Heart left ventricle (tissue), 16 donors: ENCODE measurements at regions of chr14 and their contacts with region 1.

Region 1: DNA sequence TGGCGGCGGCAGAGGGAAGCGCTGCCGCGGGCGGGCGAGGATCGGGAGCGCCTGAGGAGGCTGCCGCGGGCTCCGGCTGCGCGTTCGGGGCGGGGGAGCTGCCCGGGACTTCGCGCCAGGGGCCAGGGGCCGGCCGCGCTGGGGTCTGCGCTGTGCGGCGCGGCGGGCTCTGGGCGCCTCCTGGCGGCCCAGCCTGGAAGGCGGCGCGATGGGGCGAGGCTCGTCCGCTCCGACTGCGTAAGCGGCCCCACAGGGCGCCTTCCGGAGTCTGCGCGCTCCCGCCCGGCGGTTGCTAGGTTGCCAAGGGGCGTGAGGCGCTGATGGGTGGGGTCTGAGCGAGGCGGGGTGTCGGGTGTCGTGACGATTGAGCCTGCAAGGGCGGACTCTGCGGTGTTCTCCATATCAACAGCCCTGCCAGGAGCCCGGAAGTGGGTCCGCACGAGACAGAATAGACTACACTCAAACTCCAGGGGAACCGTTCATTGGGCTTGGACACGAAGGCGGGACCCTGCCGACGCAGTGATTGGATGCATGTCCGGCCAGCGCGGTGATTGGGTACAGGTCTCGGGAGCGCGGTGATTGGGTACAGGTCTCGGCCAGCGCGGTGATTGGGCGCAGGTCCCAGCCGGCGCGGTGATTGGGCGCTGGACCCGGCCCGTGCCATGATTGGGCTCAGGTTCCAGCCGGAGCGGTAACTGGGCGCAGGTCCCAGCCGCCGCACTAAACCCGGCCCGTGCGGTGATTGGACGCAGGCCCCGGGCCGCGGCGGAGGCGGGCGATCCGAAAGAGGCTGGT is at the start of gene TEDC1:
- DNase-seq: peak; percentile 100
- ATAC-seq: peak; percentile 78 to 91 (median 87)
- H3K4me3 ChIP-seq: peak within 1 kb of the TSS; percentile 40 to 86 (median 72)
- H3K27ac ChIP-seq: peak within 1 kb of the TSS; percentile 51 to 100 (median 96)
- H3K4me1 ChIP-seq: peaks cover 13 to 70% (median 49%) of the 10 kb centered on the region in 12 donors
- H3K27me3 ChIP-seq: no peaks in the 10 kb centered on the region
- CTCF ChIP-seq: peak; percentile 54 to 98 (median 88)
- POLR2A ChIP-seq: peak in 1 of 2 donors; percentile 40
- total RNA-seq, gene TEDC1: 0.94 to 12.4 (median 3.2) TPM

Region 2: DNA sequence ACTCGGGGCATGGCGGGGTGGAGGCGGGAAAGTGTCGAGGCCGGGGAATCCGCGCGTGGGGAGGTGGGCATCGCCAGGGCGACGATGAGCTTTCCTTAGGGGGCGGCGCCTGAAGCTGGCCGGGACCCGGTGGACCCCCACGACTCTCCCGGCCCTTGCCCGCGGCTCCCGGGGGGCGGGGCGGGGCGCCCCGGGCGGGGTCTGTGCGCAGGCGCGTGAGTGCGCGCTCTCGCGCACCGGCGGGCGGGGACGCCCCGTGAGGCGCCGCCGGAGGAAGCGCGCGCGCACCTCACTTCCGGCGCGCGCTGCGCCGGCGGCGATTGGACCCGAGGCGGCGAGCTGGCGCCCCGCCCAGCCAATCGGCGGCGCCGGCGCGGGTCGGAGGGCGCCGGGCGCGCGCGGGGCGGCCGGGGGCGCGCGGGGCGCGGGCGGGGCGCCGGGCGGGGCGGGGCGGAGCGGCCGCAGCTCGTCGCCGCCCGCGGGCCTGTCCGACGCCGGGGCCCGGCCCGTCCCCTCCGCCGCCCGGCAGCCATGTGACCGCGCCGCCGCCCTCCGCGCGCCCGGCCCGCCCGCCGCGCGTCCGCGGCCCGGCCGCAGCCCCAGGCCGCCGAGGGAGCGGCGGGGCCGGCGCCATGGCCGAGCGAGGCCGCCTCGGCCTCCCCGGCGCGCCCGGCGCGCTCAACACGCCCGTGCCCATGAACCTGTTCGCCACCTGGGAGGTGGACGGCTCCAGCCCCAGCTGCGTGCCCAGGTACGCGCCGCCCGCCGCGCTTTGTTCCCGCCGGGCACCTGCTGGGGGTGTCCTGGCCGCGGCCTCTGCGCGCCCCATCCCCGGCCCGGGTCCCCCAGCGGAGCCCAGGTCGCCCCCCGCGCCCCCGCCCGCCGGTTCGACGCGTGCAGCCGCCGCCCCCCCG is 176.2 kb before region 1 on chr14 and contains the start of gene PACS2:
- intact Hi-C with region 1: loop called in 1 of 10 experiments (anchors 5 kb)
- DNase-seq: peak; percentile 73 to 89 (median 82)
- ATAC-seq: peak; percentile 59 to 90 (median 85)
- H3K4me3 ChIP-seq: peak within 1 kb of the TSS; percentile 67 to 97 (median 80)
- H3K27ac ChIP-seq: peak within 1 kb of the TSS; percentile 54 to 99 (median 91)
- H3K4me1 ChIP-seq: peaks cover 0 to 41% (median 34%) of the 10 kb centered on the region in 12 donors
- H3K27me3 ChIP-seq: no peaks in the 10 kb centered on the region
- CTCF ChIP-seq: no peak
- POLR2A ChIP-seq: peak in 1 of 2 donors; percentile 33
- total RNA-seq, gene PACS2: 47.3 to 90.3 (median 60.8) TPM

Region 3: GRCh38 chr14:105375635-105376057 is 115.1 kb before region 1 on chr14:
- intact Hi-C with region 1: loop called (anchors 1 to 5 kb)
- DNase-seq: no peak
- ATAC-seq: no peak
- H3K4me3 ChIP-seq: no peak overlapping the region
- H3K27ac ChIP-seq: no peak overlapping the region
- H3K4me1 ChIP-seq: peaks cover 0 to 6% (median 0%) of the 10 kb centered on the region in 12 donors
- H3K27me3 ChIP-seq: no peaks in the 10 kb centered on the region
- CTCF ChIP-seq: no peak
- POLR2A ChIP-seq: no peak

Region 4: GRCh38 chr14:105448706-105449111 is 42.1 kb before region 1 on chr14:
- intact Hi-C with region 1: loop called (anchors 1 to 5 kb)
- DNase-seq: peak; percentile 76 to 89 (median 80)
- ATAC-seq: peak; percentile 77 to 93 (median 87)
- H3K4me3 ChIP-seq: peak overlapping the region in 2 of 12 donors; percentile 4 to 16
- H3K27ac ChIP-seq: peak overlapping the region in 9 of 12 donors; percentile 4 to 59 (median 32)
- H3K4me1 ChIP-seq: peaks cover 0 to 28% (median 14%) of the 10 kb centered on the region in 12 donors
- H3K27me3 ChIP-seq: no peaks in the 10 kb centered on the region
- CTCF ChIP-seq: peak; percentile 92 to 99 (median 98)
- POLR2A ChIP-seq: peak in 1 of 2 donors; percentile 11

Region 5: GRCh38 chr14:105527661-105528581 is 37.2 kb after region 1 on chr14:
- intact Hi-C with region 1: loop called in 3 of 10 experiments (anchors 2 to 5 kb)
- DNase-seq: peak; percentile 74 to 91 (median 85)
- ATAC-seq: peak; percentile 59 to 83 (median 70)
- H3K4me3 ChIP-seq: peak overlapping the region; percentile 45 to 77 (median 70)
- H3K27ac ChIP-seq: peak overlapping the region in 11 of 12 donors; percentile 24 to 78 (median 67)
- H3K4me1 ChIP-seq: peaks cover 11 to 41% (median 27%) of the 10 kb centered on the region in 12 donors
- H3K27me3 ChIP-seq: peaks cover 0 to 28% (median 0%) of the 10 kb centered on the region in 9 donors
- CTCF ChIP-seq: peak; percentile 71 to 96 (median 90)
- POLR2A ChIP-seq: peak in 1 of 2 donors; percentile 40